ENCODE measurements at regions of chr12 and their contacts with region 1.

Region 1: DNA sequence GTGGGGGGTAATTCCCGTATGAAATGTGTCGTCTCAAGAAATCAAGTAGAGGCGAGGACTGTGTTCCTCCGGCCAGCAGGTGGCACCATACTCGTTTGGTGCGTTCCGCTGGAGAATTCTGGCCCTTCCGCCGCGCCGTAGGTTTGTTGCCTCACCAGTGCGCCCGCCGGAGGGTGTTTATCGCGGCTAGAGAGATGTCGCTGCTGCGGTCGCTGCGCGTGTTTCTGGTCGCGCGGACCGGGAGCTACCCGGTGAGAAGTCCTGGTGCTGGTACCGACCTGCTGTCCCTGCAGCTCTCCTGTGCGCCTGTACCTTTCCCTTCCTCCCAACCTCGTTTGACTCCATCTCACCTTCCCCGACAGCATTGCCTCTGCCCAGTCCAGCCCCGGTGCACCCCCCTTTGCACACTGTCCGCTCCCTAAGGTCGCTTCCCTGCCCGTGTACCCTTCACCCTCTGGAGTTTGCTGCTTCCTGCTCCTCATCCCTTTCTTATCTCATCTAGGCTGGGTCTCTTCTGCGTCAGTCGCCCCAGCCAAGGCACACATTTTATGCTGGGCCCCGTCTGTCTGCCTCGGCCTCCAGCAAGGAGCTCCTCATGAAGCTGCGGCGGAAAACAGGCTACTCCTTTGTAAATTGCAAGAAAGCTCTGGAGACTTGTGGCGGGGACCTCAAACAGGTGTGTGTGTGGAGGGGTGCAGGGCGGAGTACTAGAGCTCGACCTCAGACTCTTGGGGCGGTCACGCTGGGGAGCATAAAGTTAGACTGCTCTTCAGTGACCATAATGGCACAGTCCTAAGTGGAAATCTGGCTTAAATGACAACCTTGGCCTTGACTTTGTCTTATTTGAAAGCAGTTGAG is at the start of gene TSFM:
- DNase-seq: peak; percentile 93 to 99 (median 97)
- ATAC-seq: peak; percentile 96
- H3K4me3 ChIP-seq: peak within 1 kb of the TSS; percentile 87 to 95
- H3K4me3 Mint-ChIP-seq: peak within 1 kb of the TSS; percentile 100
- H3K27ac ChIP-seq: peak within 1 kb of the TSS; percentile 72 to 85
- H3K27ac Mint-ChIP-seq: peak within 1 kb of the TSS; percentile 99
- H3K4me1 ChIP-seq: peaks cover 36% of the 10 kb centered on the region
- H3K4me1 Mint-ChIP-seq: peaks cover 51% of the 10 kb centered on the region
- H3K27me3 ChIP-seq: no peaks in the 10 kb centered on the region
- H3K27me3 Mint-ChIP-seq: no peaks in the 10 kb centered on the region
- CTCF ChIP-seq: peak; percentile 92
- total RNA-seq, gene TSFM: 37.0 to 37.1 TPM

Region 2: DNA sequence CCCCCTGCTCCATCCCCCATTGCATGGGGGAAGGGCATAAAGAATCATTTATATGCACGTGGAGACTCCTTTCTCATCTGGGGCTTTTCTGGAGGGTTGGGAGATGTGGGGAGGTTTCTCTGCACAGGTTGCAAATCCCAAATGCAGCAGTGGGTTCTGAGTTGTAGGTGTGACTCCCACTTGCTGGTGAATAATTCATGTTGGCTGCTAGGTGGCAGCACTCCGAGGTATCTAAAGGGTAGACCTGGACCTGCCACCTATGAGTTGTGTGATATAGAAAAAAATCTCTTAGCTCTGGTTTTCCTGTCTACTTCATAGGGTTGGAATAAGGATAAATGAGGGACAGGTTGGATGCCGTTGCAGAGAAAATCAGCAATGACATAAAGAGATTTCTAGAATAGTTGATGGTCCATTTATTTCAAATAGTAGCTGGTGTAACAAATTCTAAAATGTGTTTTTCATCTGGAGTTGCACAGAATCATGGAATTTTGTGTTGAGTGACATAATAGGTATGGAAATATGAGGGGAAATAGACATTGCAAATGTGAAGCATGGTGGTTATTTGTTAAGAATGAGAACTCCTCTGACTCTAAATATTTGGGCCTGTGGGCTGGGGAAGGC is 23.4 kb before region 1 on chr12:
- CTCF ChIA-PET with region 1: interaction called, 12 read pairs
- POLR2A ChIA-PET with region 1: interaction called, 5 read pairs
- intact Hi-C with region 1: loop called in 1 of 2 experiments (anchors 2 kb)
- DNase-seq: peak in 6 of 9 experiments; percentile 31 to 71 (median 50)
- ATAC-seq: no peak
- H3K4me3 ChIP-seq: no peak overlapping the region
- H3K4me3 Mint-ChIP-seq: no peak overlapping the region
- H3K27ac ChIP-seq: no peak overlapping the region
- H3K27ac Mint-ChIP-seq: peak overlapping the region; percentile 10
- H3K4me1 ChIP-seq: peaks cover 18% of the 10 kb centered on the region
- H3K4me1 Mint-ChIP-seq: peaks cover 37% of the 10 kb centered on the region
- H3K27me3 ChIP-seq: peaks cover 0 to 8% of the 10 kb centered on the region in 2 experiments
- H3K27me3 Mint-ChIP-seq: peaks cover 7% of the 10 kb centered on the region
- CTCF ChIP-seq: peak; percentile 56

Region 3: GRCh38 chr12:57765042-57765697 is 17.7 kb before region 1 on chr12:
- CTCF ChIA-PET with region 1: interaction called, 11 read pairs
- POLR2A ChIA-PET with region 1: interaction called, 5 read pairs
- intact Hi-C with region 1: loop called in 1 of 2 experiments (anchors 2 kb)
- DNase-seq: peak in 7 of 9 experiments; percentile 51 to 70 (median 66)
- ATAC-seq: peak; percentile 72
- H3K4me3 ChIP-seq: peak overlapping the region; percentile 62 to 81
- H3K4me3 Mint-ChIP-seq: peak overlapping the region; percentile 86
- H3K27ac ChIP-seq: no peak overlapping the region
- H3K27ac Mint-ChIP-seq: no peak overlapping the region
- H3K4me1 ChIP-seq: peaks cover 26% of the 10 kb centered on the region
- H3K4me1 Mint-ChIP-seq: peaks cover 25% of the 10 kb centered on the region
- H3K27me3 ChIP-seq: peaks cover 15 to 28% of the 10 kb centered on the region in 2 experiments
- H3K27me3 Mint-ChIP-seq: peaks cover 22% of the 10 kb centered on the region
- CTCF ChIP-seq: peak; percentile 51

Region 4: DNA sequence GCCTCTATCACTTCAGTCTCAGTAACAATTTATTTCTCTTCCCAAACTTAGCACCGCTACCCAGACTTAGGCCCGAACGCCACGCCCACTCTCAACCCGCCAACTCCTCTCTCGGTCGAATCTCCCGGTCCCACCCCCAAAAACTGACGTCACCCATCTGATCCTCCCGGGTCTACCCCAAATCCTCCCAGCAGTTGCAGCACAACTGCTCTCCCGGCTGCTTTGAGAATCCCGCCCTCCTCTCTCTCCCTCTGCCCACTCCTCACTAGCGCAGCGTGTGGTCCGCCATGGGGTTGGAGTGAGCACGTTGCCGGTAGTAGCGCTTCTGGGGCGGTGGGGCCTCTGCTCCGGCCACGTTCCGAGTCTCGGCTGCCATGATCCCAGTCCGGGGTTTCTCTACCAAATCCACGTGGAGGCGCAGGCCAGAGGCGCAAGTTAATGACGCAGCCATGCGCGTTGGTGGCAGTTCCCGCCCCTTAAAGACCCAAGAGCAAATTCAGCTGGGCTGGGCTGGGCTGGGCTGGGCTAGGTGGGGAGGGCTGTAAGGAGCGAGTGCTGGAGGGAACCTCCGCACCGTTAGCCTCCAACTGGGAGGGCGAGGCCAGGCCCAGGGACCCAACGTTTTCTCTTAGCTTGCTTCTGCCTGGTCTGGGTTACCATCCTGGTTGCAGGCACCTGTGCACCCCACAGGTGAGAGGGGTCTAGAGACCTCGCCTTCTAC is 11.0 kb before region 1 on chr12 and contains the start of gene METTL1:
- CTCF ChIA-PET with region 1: interaction called, 11 read pairs
- POLR2A ChIA-PET with region 1: interaction called, 6 read pairs
- intact Hi-C with region 1: loop called (anchors 1 kb)
- DNase-seq: peak; percentile 72 to 95 (median 88)
- ATAC-seq: peak; percentile 90
- H3K4me3 ChIP-seq: peak within 1 kb of the TSS; percentile 85 to 87
- H3K4me3 Mint-ChIP-seq: peak within 1 kb of the TSS; percentile 96
- H3K27ac ChIP-seq: peak within 1 kb of the TSS; percentile 81 to 82
- H3K27ac Mint-ChIP-seq: peak within 1 kb of the TSS; percentile 97
- H3K4me1 ChIP-seq: peaks cover 18% of the 10 kb centered on the region
- H3K4me1 Mint-ChIP-seq: peaks cover 17% of the 10 kb centered on the region
- H3K27me3 ChIP-seq: no peaks in the 10 kb centered on the region
- H3K27me3 Mint-ChIP-seq: no peaks in the 10 kb centered on the region
- CTCF ChIP-seq: no peak
- total RNA-seq, gene METTL1: 14.0 to 20.0 TPM

Region 5: GRCh38 chr12:57803319-57803893 is 20.6 kb after region 1 on chr12:
- CTCF ChIA-PET with region 1: interaction called, 11 read pairs
- POLR2A ChIA-PET with region 1: no interaction called
- intact Hi-C with region 1: no loop called
- DNase-seq: peak in 6 of 9 experiments; percentile 11 to 48 (median 40)
- ATAC-seq: peak; percentile 55
- H3K4me3 ChIP-seq: no peak overlapping the region
- H3K4me3 Mint-ChIP-seq: no peak overlapping the region
- H3K27ac ChIP-seq: no peak overlapping the region
- H3K27ac Mint-ChIP-seq: no peak overlapping the region
- H3K4me1 ChIP-seq: no peaks in the 10 kb centered on the region
- H3K4me1 Mint-ChIP-seq: no peaks in the 10 kb centered on the region
- H3K27me3 ChIP-seq: no peaks in the 10 kb centered on the region
- H3K27me3 Mint-ChIP-seq: no peaks in the 10 kb centered on the region
- CTCF ChIP-seq: peak; percentile 71

Region 6: GRCh38 chr12:57836442-57837375 is 53.9 kb after region 1 on chr12:
- CTCF ChIA-PET with region 1: interaction called, 4 read pairs
- POLR2A ChIA-PET with region 1: no interaction called
- intact Hi-C with region 1: loop called in 1 of 2 experiments (anchors 2 kb)
- DNase-seq: peak in 5 of 9 experiments; percentile 42 to 73 (median 55)
- ATAC-seq: peak; percentile 26
- H3K4me3 ChIP-seq: peak overlapping the region in 1 of 2 experiments; percentile 32
- H3K4me3 Mint-ChIP-seq: peak overlapping the region; percentile 63
- H3K27ac ChIP-seq: peak overlapping the region; percentile 37 to 64
- H3K27ac Mint-ChIP-seq: peak overlapping the region; percentile 94
- H3K4me1 ChIP-seq: peaks cover 98% of the 10 kb centered on the region
- H3K4me1 Mint-ChIP-seq: peaks cover 93% of the 10 kb centered on the region
- H3K27me3 ChIP-seq: no peaks in the 10 kb centered on the region
- H3K27me3 Mint-ChIP-seq: no peaks in the 10 kb centered on the region
- CTCF ChIP-seq: no peak